AG04450 (cell line): ENCODE measurements at regions of chr16 and their contacts with region 1.

Region 1: GRCh38 chr16:81035398-81035974 is at the start of gene ATMIN:
- DNase-seq: peak; percentile 36
- H3K4me3 ChIP-seq: peak within 1 kb of the TSS; percentile 74
- H3K27ac ChIP-seq: peak within 1 kb of the TSS; percentile 47
- H3K27me3 ChIP-seq: no peaks in the 10 kb centered on the region
- CTCF ChIP-seq: peak; percentile 95
- polyA plus RNA-seq, gene ATMIN: 38.1 and 48.1 TPM in 2 replicates

Region 2: DNA sequence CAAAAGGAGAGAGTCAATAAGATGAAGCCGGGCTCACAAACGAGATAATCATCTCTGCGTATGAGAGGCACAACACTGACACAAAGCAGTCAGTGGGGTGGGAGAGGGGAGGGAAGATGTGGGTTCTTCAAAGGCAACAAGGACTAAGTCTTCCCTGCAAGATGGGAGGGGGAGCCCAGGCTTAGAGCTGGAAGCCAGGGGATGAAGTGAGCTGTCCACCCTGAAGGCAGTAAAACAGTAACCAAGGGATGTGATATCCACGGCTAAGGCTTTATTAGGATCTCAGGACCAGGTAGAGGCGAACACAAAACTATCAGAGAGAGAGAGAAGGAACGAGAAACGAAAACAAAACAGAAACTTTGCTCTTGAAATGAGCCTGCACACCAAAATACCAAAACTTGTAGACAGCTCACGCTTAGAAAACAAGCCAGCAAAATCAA is 378.8 kb before region 1 on chr16:
- CTCF ChIA-PET with region 1: no interaction called
- POLR2A ChIA-PET with region 1: no interaction called
- DNase-seq: no peak
- H3K4me3 ChIP-seq: no peak overlapping the region
- H3K27ac ChIP-seq: no peak overlapping the region
- H3K27me3 ChIP-seq: no peaks in the 10 kb centered on the region
- CTCF ChIP-seq: no peak

Region 3: DNA sequence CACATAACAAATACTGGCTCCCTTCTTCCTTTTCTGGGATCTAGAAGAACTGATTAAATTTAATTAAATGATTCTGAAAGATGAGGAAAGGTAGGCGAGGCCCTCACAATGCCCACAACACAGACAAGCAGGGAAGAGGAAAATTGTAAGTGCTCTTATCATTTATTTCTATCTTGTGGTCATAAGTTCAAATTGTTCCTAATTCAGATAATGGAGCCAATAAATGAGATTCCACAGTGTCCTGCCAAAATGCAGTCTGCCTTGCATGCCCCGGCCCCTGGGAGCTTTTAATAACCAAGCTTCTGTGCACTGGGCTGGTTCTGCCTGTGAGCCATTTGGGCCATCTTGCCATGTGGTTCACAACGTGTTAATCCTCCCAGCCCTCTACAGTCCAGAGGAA is 125.8 kb before region 1 on chr16:
- CTCF ChIA-PET with region 1: no interaction called
- POLR2A ChIA-PET with region 1: no interaction called
- DNase-seq: no peak
- H3K4me3 ChIP-seq: no peak overlapping the region
- H3K27ac ChIP-seq: no peak overlapping the region
- H3K27me3 ChIP-seq: no peaks in the 10 kb centered on the region
- CTCF ChIP-seq: no peak

Region 4: DNA sequence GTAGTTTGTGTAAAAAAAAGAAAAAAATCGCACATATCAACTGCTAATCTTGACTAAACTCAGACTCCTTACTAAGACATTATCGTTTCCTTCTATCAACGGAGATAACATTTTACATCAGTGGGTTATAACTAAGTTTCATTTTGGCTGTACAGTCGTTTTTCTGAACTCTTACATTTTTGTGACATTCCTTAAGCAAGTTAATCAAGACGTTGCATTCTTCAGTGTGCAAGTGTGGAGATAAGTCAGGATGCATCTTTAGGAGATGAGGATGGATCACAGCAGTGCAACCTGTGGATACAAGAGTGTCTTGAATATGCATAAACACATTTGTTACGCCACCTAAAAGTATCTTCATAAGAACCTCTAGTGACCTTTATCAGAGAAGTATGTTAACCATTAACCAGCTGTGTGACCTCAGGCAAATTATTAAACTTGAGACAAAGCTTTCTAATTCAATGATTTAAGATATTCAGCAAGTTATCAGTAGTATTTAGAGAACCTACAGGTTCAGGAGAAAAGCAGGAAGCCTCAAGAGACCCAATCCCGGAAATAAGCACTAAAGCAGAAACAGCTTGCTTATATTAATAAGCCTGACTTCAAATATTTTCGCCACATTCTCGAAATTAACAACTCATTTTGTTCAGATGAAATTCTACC is 38.2 kb before region 1 on chr16:
- CTCF ChIA-PET with region 1: interaction called, 47 read pairs
- POLR2A ChIA-PET with region 1: no interaction called
- DNase-seq: no peak
- H3K4me3 ChIP-seq: no peak overlapping the region
- H3K27ac ChIP-seq: no peak overlapping the region
- H3K27me3 ChIP-seq: no peaks in the 10 kb centered on the region
- CTCF ChIP-seq: no peak

Region 5: GRCh38 chr16:81018496-81018895 is 17.0 kb before region 1 on chr16:
- CTCF ChIA-PET with region 1: interaction called, 10 read pairs
- POLR2A ChIA-PET with region 1: no interaction called
- DNase-seq: no peak
- H3K4me3 ChIP-seq: no peak overlapping the region
- H3K27ac ChIP-seq: no peak overlapping the region
- H3K27me3 ChIP-seq: no peaks in the 10 kb centered on the region
- CTCF ChIP-seq: no peak

Region 6: DNA sequence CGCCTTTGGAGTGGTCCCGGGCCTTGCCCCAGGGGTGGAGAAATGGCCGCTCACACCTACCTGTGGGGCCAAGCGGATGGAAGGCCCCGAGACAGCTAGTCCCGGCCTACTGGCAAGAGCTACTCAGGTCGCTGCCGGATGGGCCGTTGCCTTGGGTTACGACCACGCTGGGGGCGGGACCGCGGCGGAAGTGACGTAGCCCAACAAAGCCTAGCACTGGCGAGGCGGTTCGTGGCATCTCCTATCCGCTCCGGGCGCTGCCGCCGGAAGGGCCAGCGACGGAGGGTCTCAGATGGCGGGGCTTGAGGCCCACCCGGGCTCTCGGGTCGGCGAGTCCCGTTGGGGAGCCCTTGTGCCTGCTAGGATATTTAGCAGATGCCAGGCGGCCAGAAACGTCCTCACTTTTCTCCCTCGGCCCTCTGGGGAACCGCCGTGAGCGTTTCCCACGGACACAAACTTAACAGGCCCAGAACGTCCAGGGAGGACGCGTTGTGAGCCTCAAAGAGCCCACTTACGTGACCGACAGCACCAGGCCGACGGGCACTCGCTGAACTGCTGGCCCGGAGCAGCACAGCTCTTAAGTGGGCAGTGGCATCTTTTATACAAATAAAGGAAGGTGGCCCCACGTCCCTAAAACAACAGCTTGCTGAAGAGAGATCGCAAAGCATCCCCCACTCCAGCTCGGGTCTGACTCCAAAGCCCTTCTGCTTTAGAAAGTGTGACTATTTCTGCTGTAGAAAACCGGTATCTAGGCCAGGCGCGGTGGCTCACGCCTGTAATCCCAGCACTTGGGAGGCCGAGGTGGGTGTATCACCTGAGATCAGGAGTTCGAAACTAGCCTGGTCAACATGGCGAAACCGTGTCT is 41.8 kb after region 1 on chr16 and contains the start of gene C16orf46:
- CTCF ChIA-PET with region 1: interaction called, 16 read pairs
- POLR2A ChIA-PET with region 1: no interaction called
- DNase-seq: peak; percentile 84
- H3K4me3 ChIP-seq: peak within 1 kb of the TSS; percentile 93
- H3K27ac ChIP-seq: peak within 1 kb of the TSS; percentile 96
- H3K27me3 ChIP-seq: no peaks in the 10 kb centered on the region
- CTCF ChIP-seq: no peak
- polyA plus RNA-seq, gene C16orf46: 0.31 and 0.33 TPM in 2 replicates

Region 7: GRCh38 chr16:81314603-81315270 is 279.3 kb after region 1 on chr16 and contains the start of gene GAN:
- CTCF ChIA-PET with region 1: interaction called, 11 read pairs
- POLR2A ChIA-PET with region 1: no interaction called
- DNase-seq: peak; percentile 88
- H3K4me3 ChIP-seq: peak within 1 kb of the TSS; percentile 72
- H3K27ac ChIP-seq: peak within 1 kb of the TSS; percentile 40
- H3K27me3 ChIP-seq: no peaks in the 10 kb centered on the region
- CTCF ChIP-seq: no peak
- polyA plus RNA-seq, gene GAN: 3.3 and 4.3 TPM in 2 replicates